ENCODE measurements at regions of chr6 and their contacts with region 1.

Region 1: DNA sequence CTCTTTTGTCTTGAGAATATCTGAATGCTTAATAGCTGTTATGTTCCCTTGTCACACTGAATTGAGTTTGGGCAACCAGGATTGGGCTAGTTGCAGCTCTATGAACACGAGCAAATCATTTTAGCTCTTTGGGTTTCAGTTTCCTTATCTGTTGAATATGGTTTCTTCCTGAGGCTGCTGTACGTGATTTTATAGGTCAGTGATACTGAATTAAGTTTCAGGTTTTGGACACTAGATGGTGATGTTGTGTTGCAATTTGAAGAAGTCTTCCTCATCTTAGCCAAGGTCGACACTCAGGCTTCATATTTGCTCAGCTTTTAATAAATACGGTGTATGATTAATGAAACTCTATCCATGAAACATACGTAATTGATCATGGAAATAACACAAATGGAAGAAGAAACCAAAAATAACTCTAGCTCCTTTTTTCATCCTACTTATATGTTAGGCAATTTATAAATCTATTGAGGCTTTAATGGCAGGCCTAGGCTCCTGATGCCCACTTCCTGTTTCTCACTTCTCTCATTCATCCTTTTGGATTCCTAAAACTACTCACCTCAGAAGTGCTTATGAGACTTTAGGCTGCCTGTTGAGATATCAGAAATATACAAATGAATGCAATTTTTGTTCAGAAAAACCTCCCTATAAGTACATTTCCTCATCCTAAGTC is 354.1 kb upstream of the MAP3K7 start:
- DNase-seq: peak; percentile 5
- H3K4me3 ChIP-seq: peak overlapping the region; percentile 21; the same call in 1 of the 2 replicates
- CTCF ChIP-seq: peak; percentile 32

Region 2: GRCh38 chr6:90846824-90847223 is 94.1 kb before region 1 on chr6:
- CTCF ChIA-PET with region 1: no interaction called
- POLR2A ChIA-PET with region 1: no interaction called
- DNase-seq: no peak
- H3K4me3 ChIP-seq: no peak overlapping the region
- CTCF ChIP-seq: no peak

Region 3: GRCh38 chr6:90953405-90954161 is 12.6 kb after region 1 on chr6:
- CTCF ChIA-PET with region 1: interaction called, 13 read pairs
- POLR2A ChIA-PET with region 1: no interaction called
- DNase-seq: no peak
- H3K4me3 ChIP-seq: no peak overlapping the region
- CTCF ChIP-seq: no peak